MCF 10A (cell line): ENCODE measurements at regions of chr12 and their contacts with region 1.

Region 1: GRCh38 chr12:91109148-91109564 is 2.1 kb downstream of the LUM start:
- DNase-seq: peak; percentile 71
- H3K4me3 Mint-ChIP-seq: no peak overlapping the region
- H3K27ac Mint-ChIP-seq: no peak overlapping the region
- H3K4me1 Mint-ChIP-seq: no peaks in the 10 kb centered on the region
- H3K27me3 Mint-ChIP-seq: peaks cover 71% of the 10 kb centered on the region
- CTCF ChIP-seq: peak; percentile 57

Region 2: GRCh38 chr12:90959538-90960139 is 149.5 kb before region 1 on chr12:
- CTCF ChIA-PET with region 1: interaction called, 4 read pairs
- POLR2A ChIA-PET with region 1: no interaction called
- intact Hi-C with region 1: loop called (anchors 1 kb)
- DNase-seq: peak; percentile 62
- H3K4me3 Mint-ChIP-seq: no peak overlapping the region
- H3K27ac Mint-ChIP-seq: no peak overlapping the region
- H3K4me1 Mint-ChIP-seq: no peaks in the 10 kb centered on the region
- H3K27me3 Mint-ChIP-seq: no peaks in the 10 kb centered on the region
- CTCF ChIP-seq: peak; percentile 48

Region 3: DNA sequence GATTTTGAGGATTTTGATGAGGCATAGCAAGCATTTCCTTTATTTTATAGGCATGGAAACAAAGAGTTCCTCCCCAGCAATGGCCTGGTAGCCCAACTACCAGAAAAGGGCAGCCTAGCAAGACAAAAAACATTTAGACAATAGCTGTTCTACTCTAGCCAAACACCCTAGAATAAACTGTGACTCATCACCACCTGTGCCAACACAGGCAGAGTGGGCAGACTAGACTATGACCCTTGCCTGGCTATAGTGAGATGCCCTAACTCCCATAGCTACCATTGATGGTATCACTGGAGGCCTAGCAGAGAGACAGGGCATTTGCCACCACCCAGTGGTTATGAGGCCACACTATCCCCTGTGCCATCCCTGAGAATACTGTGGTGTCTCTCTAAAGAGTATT is 138.7 kb before region 1 on chr12:
- CTCF ChIA-PET with region 1: interaction called, 10 read pairs
- POLR2A ChIA-PET with region 1: interaction called, 3 read pairs
- intact Hi-C with region 1: no loop called
- DNase-seq: peak; percentile 34
- H3K4me3 Mint-ChIP-seq: no peak overlapping the region
- H3K27ac Mint-ChIP-seq: no peak overlapping the region
- H3K4me1 Mint-ChIP-seq: no peaks in the 10 kb centered on the region
- H3K27me3 Mint-ChIP-seq: peaks cover 15% of the 10 kb centered on the region
- CTCF ChIP-seq: no peak

Region 4: GRCh38 chr12:90978117-90978770 is 130.9 kb before region 1 on chr12:
- CTCF ChIA-PET with region 1: interaction called, 75 read pairs
- POLR2A ChIA-PET with region 1: no interaction called
- intact Hi-C with region 1: loop called (anchors 1 kb)
- DNase-seq: peak; percentile 63
- H3K4me3 Mint-ChIP-seq: no peak overlapping the region
- H3K27ac Mint-ChIP-seq: no peak overlapping the region
- H3K4me1 Mint-ChIP-seq: no peaks in the 10 kb centered on the region
- H3K27me3 Mint-ChIP-seq: peaks cover 15% of the 10 kb centered on the region
- CTCF ChIP-seq: peak; percentile 77

Region 5: GRCh38 chr12:91098941-91099340 is 10.2 kb before region 1 on chr12:
- CTCF ChIA-PET with region 1: interaction called, 20 read pairs
- POLR2A ChIA-PET with region 1: no interaction called
- intact Hi-C with region 1: no loop called
- DNase-seq: peak; percentile 71
- H3K4me3 Mint-ChIP-seq: no peak overlapping the region
- H3K27ac Mint-ChIP-seq: no peak overlapping the region
- H3K4me1 Mint-ChIP-seq: peaks cover 5% of the 10 kb centered on the region
- H3K27me3 Mint-ChIP-seq: peaks cover 9% of the 10 kb centered on the region
- CTCF ChIP-seq: no peak

Region 6: GRCh38 chr12:91455321-91455720 is 346.2 kb after region 1 on chr12:
- CTCF ChIA-PET with region 1: no interaction called
- POLR2A ChIA-PET with region 1: no interaction called
- intact Hi-C with region 1: no loop called
- DNase-seq: no peak
- H3K4me3 Mint-ChIP-seq: no peak overlapping the region
- H3K27ac Mint-ChIP-seq: no peak overlapping the region
- H3K4me1 Mint-ChIP-seq: no peaks in the 10 kb centered on the region
- H3K27me3 Mint-ChIP-seq: no peaks in the 10 kb centered on the region
- CTCF ChIP-seq: no peak